Naive thymus-derived CD4-positive, alpha-beta T cell (primary cell): ENCODE measurements at regions of chr19 and their contacts with region 1.

Region 1: GRCh38 chr19:42567561-42567960 is 27.2 kb downstream of the CEACAM8 start:
- DNase-seq: no peak
- ATAC-seq: no peak
- H3K4me3 ChIP-seq: no peak overlapping the region
- H3K4me3 Mint-ChIP-seq: no peak overlapping the region
- H3K27ac ChIP-seq: no peak overlapping the region
- H3K27ac Mint-ChIP-seq: no peak overlapping the region
- H3K4me1 ChIP-seq: no peaks in the 10 kb centered on the region
- H3K4me1 Mint-ChIP-seq: peaks cover 0 to 9% (median 4%) of the 10 kb centered on the region in 7 donors
- H3K27me3 ChIP-seq: no peaks in the 10 kb centered on the region
- H3K27me3 Mint-ChIP-seq: peaks cover under 1 to 29% (median 14%) of the 10 kb centered on the region in 5 donors

Region 2: GRCh38 chr19:42596391-42597072 is 29.0 kb after region 1 on chr19:
- CTCF ChIA-PET with region 1: no interaction called
- POLR2A ChIA-PET with region 1: no interaction called
- intact Hi-C with region 1: loop called (anchors 1 to 2 kb)
- DNase-seq: peak in 7 of 9 donors; percentile 2 to 54 (median 25)
- ATAC-seq: peak; percentile 61
- H3K4me3 ChIP-seq: no peak overlapping the region
- H3K4me3 Mint-ChIP-seq: no peak overlapping the region
- H3K27ac ChIP-seq: no peak overlapping the region
- H3K27ac Mint-ChIP-seq: no peak overlapping the region
- H3K4me1 ChIP-seq: no peaks in the 10 kb centered on the region
- H3K4me1 Mint-ChIP-seq: peaks cover 0 to 6% (median 4%) of the 10 kb centered on the region in 7 donors
- H3K27me3 ChIP-seq: no peaks in the 10 kb centered on the region
- H3K27me3 Mint-ChIP-seq: peaks cover 7 to 15% (median 10%) of the 10 kb centered on the region in 5 donors

Region 3: GRCh38 chr19:42683917-42684513 is 116.5 kb after region 1 on chr19:
- CTCF ChIA-PET with region 1: no interaction called
- POLR2A ChIA-PET with region 1: no interaction called
- intact Hi-C with region 1: no loop called
- DNase-seq: peak in 2 of 9 donors; percentile 5 to 7
- ATAC-seq: no peak
- H3K4me3 ChIP-seq: no peak overlapping the region
- H3K4me3 Mint-ChIP-seq: no peak overlapping the region
- H3K27ac ChIP-seq: no peak overlapping the region
- H3K27ac Mint-ChIP-seq: no peak overlapping the region
- H3K4me1 ChIP-seq: no peaks in the 10 kb centered on the region
- H3K4me1 Mint-ChIP-seq: no peaks in the 10 kb centered on the region
- H3K27me3 ChIP-seq: no peaks in the 10 kb centered on the region
- H3K27me3 Mint-ChIP-seq: peaks cover 0 to 28% (median 9%) of the 10 kb centered on the region in 5 donors

Region 4: DNA sequence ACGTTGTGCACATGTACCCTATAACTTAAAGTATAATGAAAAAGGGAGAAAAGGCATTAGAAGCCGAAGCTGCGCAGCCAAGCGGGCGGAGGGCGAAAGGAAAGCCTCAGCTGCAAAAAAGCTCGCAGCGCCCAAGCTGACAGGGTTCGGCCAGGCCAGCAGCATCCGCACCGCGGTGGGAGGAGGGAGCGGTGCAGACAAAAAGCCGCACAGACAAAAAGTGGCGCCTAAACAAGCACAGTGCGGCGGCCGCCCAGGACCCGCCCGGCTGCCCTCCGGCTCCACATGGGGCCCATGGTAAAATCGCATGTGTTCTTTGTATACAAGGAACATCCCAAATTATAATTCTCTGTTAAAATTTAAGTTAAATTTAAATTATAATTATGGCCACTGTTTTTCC is 130.3 kb after region 1 on chr19:
- CTCF ChIA-PET with region 1: no interaction called
- POLR2A ChIA-PET with region 1: no interaction called
- intact Hi-C with region 1: no loop called
- DNase-seq: no peak
- ATAC-seq: no peak
- H3K4me3 ChIP-seq: no peak overlapping the region
- H3K4me3 Mint-ChIP-seq: no peak overlapping the region
- H3K27ac ChIP-seq: no peak overlapping the region
- H3K27ac Mint-ChIP-seq: no peak overlapping the region
- H3K4me1 ChIP-seq: no peaks in the 10 kb centered on the region
- H3K4me1 Mint-ChIP-seq: no peaks in the 10 kb centered on the region
- H3K27me3 ChIP-seq: peaks cover 0 to 2% of the 10 kb centered on the region in 2 donors
- H3K27me3 Mint-ChIP-seq: peaks cover 22 to 61% (median 58%) of the 10 kb centered on the region in 5 donors

Region 5: DNA sequence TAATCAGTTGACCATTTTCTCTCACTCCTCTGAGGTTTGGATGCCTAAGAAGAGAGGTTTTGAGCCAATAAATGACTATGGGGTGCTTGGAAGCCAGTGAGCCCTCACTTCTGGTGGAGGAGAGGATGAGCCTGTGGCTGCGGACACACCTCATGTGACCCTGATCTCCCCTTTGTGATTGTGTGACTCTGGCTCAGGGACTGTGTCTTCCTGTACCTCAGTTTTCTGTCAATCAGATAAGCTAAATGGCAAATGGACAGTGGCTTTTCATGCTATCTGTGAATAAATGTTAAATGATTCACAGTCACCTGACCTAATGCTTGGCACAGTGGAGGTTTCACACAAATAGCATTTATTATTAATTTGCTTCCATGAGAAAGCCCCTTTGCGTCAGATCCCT is 195.2 kb after region 1 on chr19:
- CTCF ChIA-PET with region 1: no interaction called
- POLR2A ChIA-PET with region 1: no interaction called
- intact Hi-C with region 1: no loop called
- DNase-seq: no peak
- ATAC-seq: no peak
- H3K4me3 ChIP-seq: no peak overlapping the region
- H3K4me3 Mint-ChIP-seq: no peak overlapping the region
- H3K27ac ChIP-seq: no peak overlapping the region
- H3K27ac Mint-ChIP-seq: no peak overlapping the region
- H3K4me1 ChIP-seq: no peaks in the 10 kb centered on the region
- H3K4me1 Mint-ChIP-seq: no peaks in the 10 kb centered on the region
- H3K27me3 ChIP-seq: no peaks in the 10 kb centered on the region
- H3K27me3 Mint-ChIP-seq: peaks cover 2 to 18% (median 5%) of the 10 kb centered on the region in 5 donors

Region 6: DNA sequence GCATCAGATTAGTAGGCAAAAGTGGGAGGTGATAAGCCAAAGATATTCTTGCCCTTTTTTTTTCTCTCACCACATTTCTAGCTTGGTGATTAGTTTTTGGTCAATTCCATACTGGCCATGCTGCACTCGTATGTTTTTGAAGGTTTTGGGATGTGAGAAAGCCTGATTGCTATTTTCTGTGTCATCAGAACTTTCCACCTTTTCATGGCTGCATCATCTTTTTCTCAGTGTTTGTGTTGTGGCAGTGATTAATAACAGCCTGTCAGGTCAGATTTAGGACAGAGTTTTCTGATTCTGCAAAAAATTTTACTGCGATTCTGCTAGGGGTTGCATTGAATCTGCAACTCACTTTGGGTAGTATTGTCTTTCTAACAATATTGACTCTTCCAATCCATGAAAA is 279.0 kb after region 1 on chr19:
- CTCF ChIA-PET with region 1: no interaction called
- POLR2A ChIA-PET with region 1: no interaction called
- intact Hi-C with region 1: no loop called
- DNase-seq: no peak
- ATAC-seq: no peak
- H3K4me3 ChIP-seq: no peak overlapping the region
- H3K4me3 Mint-ChIP-seq: no peak overlapping the region
- H3K27ac ChIP-seq: no peak overlapping the region
- H3K27ac Mint-ChIP-seq: no peak overlapping the region
- H3K4me1 ChIP-seq: no peaks in the 10 kb centered on the region
- H3K4me1 Mint-ChIP-seq: no peaks in the 10 kb centered on the region
- H3K27me3 ChIP-seq: no peaks in the 10 kb centered on the region
- H3K27me3 Mint-ChIP-seq: peaks cover 0 to 24% (median 7%) of the 10 kb centered on the region in 5 donors